Psoas muscle (tissue), 8 donors: ENCODE measurements at regions of chr11 and their contacts with region 1.

Region 1: DNA sequence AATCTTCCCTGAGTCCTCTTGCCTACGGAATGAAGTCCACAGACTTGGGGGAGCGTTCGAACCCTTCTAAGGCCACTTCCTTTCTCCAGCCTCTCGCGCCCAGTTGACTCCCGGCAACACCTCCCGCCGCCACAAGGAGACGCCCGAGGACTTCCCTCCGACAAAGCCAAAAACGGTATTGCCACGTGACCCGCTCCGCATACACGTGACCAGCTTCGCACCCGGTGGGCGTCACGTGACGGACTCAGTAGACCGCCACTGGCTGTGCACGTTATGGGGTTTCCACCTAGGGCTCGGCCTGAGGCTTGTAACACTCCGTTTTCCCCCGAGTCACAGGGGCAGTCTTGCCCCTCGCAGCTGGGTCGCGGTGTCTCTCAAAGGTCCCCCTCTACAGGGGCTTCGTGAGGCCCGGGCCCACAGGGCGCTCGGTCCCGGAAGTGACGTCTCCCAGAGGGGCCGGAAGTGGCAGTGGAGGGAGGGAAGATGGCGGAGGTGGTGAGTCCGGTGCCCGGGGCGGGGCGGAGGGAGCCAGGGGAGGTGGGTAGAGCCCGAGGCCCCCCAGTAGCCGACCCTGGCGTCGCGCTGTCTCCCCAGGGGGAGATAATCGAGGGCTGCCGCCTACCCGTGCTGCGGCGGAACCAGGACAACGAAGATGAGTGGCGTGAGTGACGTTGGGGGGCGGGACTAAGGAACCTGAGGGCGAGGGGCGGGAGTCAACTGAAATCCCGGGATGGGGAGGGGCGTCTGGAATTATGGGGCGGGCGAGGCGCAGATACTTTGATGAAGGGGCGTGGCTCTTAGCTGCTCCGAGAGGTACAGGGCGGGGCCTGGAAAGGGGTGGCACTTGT is at the start of gene KAT5:
- DNase-seq: peak; percentile 98 to 99
- ATAC-seq: peak; percentile 90 to 94 (median 92)
- H3K4me3 ChIP-seq: peak within 1 kb of the TSS; percentile 90
- H3K27ac ChIP-seq: peak within 1 kb of the TSS; percentile 100
- H3K4me1 ChIP-seq: peaks cover 13% of the 10 kb centered on the region
- H3K27me3 ChIP-seq: no peaks in the 10 kb centered on the region
- CTCF ChIP-seq: peak; percentile 98
- total RNA-seq, gene KAT5: 34.5 to 56.4 (median 41.8) TPM

Region 2: DNA sequence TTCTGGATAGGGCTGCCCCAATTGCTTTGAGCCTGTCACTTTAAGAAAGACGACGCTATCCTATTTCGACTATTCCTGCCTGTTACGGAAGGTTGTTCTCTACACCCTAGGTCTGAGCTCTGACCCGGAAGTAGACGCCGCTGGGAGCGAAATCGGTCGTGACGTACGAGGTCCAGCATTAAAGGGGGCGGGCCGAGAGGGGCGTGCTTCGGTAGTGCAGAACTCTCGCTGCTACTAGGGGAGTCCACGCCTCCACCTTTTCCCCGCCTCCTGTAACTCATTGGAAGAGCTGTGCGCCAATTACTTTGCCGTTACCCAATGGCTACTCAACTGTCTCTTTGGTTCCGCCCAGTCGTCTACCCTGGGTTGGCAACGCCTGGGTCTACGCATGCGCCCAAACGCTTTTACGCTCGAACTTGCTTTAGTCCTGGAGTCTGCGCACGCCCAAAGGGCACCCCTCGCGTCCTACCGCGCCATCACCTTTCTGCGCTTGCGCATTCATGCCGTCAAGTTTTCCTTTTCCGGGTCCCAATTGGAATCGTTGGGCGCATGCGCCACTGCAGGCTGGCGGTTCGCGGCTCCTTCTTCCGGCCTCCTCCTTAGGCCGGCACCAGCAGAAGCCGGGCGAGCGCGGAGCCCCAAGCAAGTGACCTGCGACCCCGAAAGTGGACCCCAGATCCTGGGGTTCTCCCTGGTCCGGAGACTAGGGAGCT is 96.6 kb before region 1 on chr11 and contains the start of gene PCNX3:
- intact Hi-C with region 1: loop called in 1 of 2 experiments (anchors 5 kb)
- DNase-seq: peak; percentile 100
- ATAC-seq: peak; percentile 85 to 88 (median 85)
- H3K4me3 ChIP-seq: peak within 1 kb of the TSS; percentile 97
- H3K27ac ChIP-seq: peak within 1 kb of the TSS; percentile 89
- H3K4me1 ChIP-seq: peaks cover 35% of the 10 kb centered on the region
- H3K27me3 ChIP-seq: no peaks in the 10 kb centered on the region
- CTCF ChIP-seq: no peak
- total RNA-seq, gene PCNX3: 8.9 to 10.8 (median 9.7) TPM

Region 3: DNA sequence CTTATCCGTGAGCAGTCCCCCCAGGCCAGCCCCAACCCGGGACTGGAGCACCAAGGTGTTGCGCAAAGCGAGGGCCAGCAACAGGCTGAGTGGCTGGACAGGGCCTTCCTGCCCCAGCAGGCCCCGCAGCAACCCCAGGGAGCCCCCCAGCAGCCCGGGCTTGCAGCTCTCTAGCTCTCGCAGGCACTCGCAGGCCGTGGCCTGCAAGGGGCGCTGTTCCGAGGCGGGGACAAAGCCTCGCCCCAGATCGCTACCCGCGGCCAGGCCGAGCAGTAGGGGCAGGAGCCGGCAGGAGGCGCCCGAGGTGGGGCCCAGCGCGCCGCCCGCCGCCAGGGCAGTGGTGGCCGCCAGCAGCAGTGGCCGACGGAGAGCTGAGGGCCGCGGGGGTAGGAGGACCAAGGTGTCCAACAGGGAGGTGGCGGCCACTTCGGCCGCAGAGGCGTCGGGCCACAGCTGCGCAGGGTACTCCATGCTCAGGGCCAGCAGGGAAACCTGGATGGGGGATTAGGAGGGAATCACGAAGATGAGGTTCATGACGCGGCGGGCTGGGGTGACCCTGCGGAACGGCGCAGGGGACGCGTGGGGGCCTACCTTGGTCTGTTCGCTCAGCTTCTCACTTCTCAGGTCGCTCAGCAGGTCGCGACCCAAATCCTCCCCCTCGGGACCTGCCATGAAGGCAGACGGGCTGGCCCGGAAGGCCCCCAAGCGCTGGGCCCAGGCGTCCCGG is 68.0 kb after region 1 on chr11:
- intact Hi-C with region 1: loop called in 1 of 2 experiments (anchors 5 kb)
- DNase-seq: peak; percentile 84 to 89
- ATAC-seq: peak; percentile 79 to 87 (median 85)
- H3K4me3 ChIP-seq: peak overlapping the region; percentile 96
- H3K27ac ChIP-seq: peak overlapping the region; percentile 79
- H3K4me1 ChIP-seq: peaks cover 20% of the 10 kb centered on the region
- H3K27me3 ChIP-seq: peaks cover 0 to 6% (median under 1%) of the 10 kb centered on the region in 3 donors
- CTCF ChIP-seq: peak; percentile 85

Region 4: GRCh38 chr11:65817835-65818742 is 106.1 kb after region 1 on chr11:
- intact Hi-C with region 1: loop called in 1 of 2 experiments (anchors 2 kb)
- DNase-seq: peak; percentile 95 to 98
- ATAC-seq: peak; percentile 96 to 99 (median 98)
- H3K4me3 ChIP-seq: peak overlapping the region; percentile 70
- H3K27ac ChIP-seq: peak overlapping the region; percentile 54
- H3K4me1 ChIP-seq: no peaks in the 10 kb centered on the region
- H3K27me3 ChIP-seq: no peaks in the 10 kb centered on the region
- CTCF ChIP-seq: peak; percentile 100

Region 5: GRCh38 chr11:65919146-65920033 is 207.4 kb after region 1 on chr11 and contains the start of gene DRAP1:
- intact Hi-C with region 1: loop called in 1 of 2 experiments (anchors 1 kb)
- DNase-seq: peak; percentile 99 to 100
- ATAC-seq: peak; percentile 83 to 88 (median 86)
- H3K4me3 ChIP-seq: peak within 1 kb of the TSS; percentile 100
- H3K27ac ChIP-seq: peak within 1 kb of the TSS; percentile 99
- H3K4me1 ChIP-seq: peaks cover 43% of the 10 kb centered on the region
- H3K27me3 ChIP-seq: no peaks in the 10 kb centered on the region
- CTCF ChIP-seq: no peak
- total RNA-seq, gene DRAP1: 74.5 to 138 (median 91.3) TPM

Region 6: GRCh38 chr11:65988791-65989592 is 277.0 kb after region 1 on chr11:
- intact Hi-C with region 1: loop called in 1 of 2 experiments (anchors 5 kb)
- DNase-seq: peak; percentile 83 to 85
- ATAC-seq: peak; percentile 95 to 99 (median 98)
- H3K4me3 ChIP-seq: no peak overlapping the region
- H3K27ac ChIP-seq: no peak overlapping the region
- H3K4me1 ChIP-seq: peaks cover 3% of the 10 kb centered on the region
- H3K27me3 ChIP-seq: no peaks in the 10 kb centered on the region
- CTCF ChIP-seq: peak; percentile 95